ENCODE measurements at regions of chr22 and their contacts with region 1.

Region 1: GRCh38 chr22:28855355-28856094 is 27.8 kb upstream of the ZNRF3 start:
- DNase-seq: peak; percentile 61 to 72
- H3K4me3 ChIP-seq: no peak overlapping the region
- H3K4me1 ChIP-seq: no peaks in the 10 kb centered on the region
- H3K27me3 ChIP-seq: no peaks in the 10 kb centered on the region

Region 2: DNA sequence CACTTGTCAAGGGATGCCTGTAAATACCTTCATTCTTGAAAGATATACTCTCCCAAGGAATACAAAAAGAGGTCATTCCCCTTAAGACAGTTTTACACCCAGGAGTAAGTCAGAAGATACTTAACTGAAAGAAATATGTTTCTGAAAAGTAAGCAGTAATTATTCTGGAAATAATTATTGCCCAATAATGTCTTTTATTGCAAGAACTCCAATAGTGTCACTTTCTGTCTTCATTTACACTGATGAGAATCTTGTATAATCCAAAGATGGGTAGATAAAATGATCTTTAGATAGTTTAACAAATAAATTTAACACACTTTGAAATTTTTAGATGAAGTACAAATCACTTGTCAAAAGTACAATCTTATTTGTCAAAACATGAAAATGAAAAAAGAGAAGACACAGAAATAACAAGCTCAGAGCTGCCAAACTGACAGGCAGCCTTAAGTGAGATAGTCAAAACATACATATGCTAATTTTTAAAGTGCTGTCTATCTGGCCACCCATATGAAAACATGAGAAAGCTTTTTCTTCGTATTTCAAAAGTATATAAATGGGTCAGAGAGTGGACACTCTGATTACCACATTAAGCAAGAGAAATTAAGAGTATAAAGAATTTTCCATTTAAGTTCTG is 401.0 kb before region 1 on chr22:
- in situ Hi-C with region 1: no loop called
- DNase-seq: no peak
- H3K4me3 ChIP-seq: no peak overlapping the region
- H3K4me1 ChIP-seq: peaks cover 16% of the 10 kb centered on the region
- H3K27me3 ChIP-seq: no peaks in the 10 kb centered on the region

Region 3: GRCh38 chr22:29040385-29041275 is 185.1 kb after region 1 on chr22:
- in situ Hi-C with region 1: loop called (anchors 5 kb)
- DNase-seq: peak; percentile 80 to 85
- H3K4me3 ChIP-seq: no peak overlapping the region
- H3K4me1 ChIP-seq: peaks cover 4% of the 10 kb centered on the region; the same call in 1 of the 2 replicates
- H3K27me3 ChIP-seq: no peaks in the 10 kb centered on the region

Region 4: DNA sequence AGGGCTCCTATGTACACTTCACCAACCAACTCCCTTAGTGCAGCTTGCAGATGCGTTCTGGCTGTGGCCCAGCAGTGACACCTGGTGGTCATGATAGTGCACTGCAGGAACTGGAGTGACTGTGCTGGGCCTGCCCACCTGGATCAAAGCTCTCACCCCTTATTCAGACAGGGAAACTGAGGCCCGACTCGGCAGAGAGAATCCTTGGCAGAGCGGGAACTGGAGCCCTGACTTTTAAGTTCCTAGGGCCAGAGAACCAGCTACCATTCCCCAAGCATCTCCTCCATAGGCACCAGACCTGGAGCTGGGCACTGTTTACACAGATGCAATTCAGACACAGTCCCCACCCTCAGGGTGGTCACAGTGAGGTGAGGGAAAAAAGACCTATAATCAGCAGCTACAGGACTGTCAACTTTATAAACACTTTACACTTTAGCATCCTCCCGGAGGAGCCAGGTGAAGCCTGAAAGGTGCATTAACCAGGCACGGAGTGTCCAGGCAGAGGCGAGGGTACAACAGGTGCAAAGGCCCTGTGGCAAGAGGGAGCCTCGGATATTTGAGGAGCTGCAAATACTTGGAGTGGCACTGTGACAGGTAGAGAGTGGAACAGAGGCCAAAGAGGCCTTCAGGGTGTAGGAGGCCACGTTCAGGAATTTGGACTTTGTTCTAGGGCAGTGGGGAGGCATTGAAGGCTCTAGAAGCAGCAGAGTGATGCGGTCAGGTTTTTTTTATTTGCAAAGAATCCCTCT is 390.3 kb after region 1 on chr22:
- in situ Hi-C with region 1: loop called (anchors 5 kb)
- DNase-seq: peak; percentile 59 to 77
- H3K4me3 ChIP-seq: no peak overlapping the region
- H3K4me1 ChIP-seq: no peaks in the 10 kb centered on the region
- H3K27me3 ChIP-seq: no peaks in the 10 kb centered on the region

Measured in HAP-1 (cell line).